ENCODE measurements at regions of chr17 and their contacts with region 1.

Region 1: DNA sequence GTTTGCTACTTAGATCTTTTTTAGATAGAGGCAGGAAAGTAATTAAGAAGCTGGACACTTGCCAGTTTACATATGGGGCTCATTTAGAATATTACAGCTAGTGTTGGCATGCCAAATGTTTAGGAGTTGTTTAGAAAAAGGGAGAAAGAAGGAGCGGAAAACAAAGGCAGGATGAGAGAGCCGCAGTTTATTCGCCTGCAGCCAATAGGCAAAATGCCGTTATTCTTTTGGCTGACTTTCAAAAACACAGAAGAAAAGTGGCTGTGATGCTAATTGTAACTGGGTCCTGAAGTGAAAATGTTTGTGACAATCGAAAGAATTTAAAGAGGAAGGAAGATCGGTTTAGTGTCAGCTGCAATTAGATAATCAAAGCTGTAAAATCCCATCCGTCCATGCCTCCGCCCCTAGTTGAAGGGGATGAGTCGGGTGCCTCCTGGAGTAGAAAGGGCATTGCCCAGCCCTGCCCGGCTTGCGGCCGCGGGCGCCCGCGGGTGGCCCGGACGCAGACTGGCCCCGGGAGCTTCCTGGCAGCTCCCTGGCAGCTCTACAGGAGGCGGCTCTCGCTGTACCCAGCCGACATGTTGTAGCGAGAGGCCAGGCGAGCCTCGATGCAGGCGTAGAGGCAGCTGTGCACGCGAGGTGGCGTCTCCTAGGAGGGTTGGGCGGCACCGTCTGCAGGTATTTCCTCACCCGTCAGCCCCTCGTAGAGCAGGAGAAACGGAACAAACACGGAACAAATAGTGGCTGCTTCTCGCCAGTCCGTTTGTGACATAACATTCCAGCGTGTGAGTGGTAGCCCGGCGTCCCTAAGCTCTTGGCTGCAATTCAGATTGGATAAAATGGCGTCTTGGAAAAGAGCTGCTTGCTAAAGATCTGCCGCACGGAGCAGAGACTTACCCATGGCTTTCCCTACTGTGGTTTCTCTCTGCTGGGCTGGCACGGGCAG is 82.2 kb downstream of the TNRC6C start:
- DNase-seq: peak; percentile 95
- H3K4me3 ChIP-seq: peak overlapping the region; percentile 72 to 75
- H3K27ac ChIP-seq: peak overlapping the region; percentile 89 to 100
- H3K4me1 ChIP-seq: peaks cover 7 to 41% of the 10 kb centered on the region in 2 experiments; a peak in 2 of 4 replicates
- H3K27me3 ChIP-seq: no peaks in the 10 kb centered on the region
- CTCF ChIP-seq: peak; percentile 40
- EP300 ChIP-seq: peak in 1 of 2 experiments; percentile 77; a peak in 2 of 4 replicates
- RAD21 ChIP-seq: peak; percentile 9; the same call in 1 of the 2 replicates

Region 2: DNA sequence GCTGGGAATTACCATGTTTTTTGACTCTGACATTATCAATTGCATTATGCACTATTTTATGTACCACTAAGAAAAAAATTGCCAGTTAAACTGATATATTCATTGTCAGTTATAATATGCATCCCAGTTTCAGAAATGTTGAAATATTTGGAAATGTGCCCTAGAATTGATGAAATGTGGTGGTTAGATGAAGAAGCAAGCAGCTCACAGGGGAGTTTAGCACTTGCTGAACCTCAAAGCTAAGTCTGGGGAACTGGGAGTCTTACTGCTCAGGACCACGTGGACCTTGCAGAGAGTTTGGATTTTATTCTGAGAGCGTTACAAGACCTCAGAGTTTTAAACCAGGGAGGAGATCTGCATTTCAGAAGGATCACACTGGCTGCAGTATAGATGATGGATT is 14.3 kb before region 1 on chr17:
- CTCF ChIA-PET with region 1: interaction called, 49 read pairs
- POLR2A ChIA-PET with region 1: interaction called, 5 read pairs
- DNase-seq: no peak
- H3K4me3 ChIP-seq: no peak overlapping the region
- H3K27ac ChIP-seq: no peak overlapping the region
- H3K4me1 ChIP-seq: peaks cover 0 to under 1% of the 10 kb centered on the region in 2 experiments; a peak in 2 of 4 replicates
- H3K27me3 ChIP-seq: no peaks in the 10 kb centered on the region
- CTCF ChIP-seq: no peak
- EP300 ChIP-seq: no peak
- RAD21 ChIP-seq: no peak

Region 3: DNA sequence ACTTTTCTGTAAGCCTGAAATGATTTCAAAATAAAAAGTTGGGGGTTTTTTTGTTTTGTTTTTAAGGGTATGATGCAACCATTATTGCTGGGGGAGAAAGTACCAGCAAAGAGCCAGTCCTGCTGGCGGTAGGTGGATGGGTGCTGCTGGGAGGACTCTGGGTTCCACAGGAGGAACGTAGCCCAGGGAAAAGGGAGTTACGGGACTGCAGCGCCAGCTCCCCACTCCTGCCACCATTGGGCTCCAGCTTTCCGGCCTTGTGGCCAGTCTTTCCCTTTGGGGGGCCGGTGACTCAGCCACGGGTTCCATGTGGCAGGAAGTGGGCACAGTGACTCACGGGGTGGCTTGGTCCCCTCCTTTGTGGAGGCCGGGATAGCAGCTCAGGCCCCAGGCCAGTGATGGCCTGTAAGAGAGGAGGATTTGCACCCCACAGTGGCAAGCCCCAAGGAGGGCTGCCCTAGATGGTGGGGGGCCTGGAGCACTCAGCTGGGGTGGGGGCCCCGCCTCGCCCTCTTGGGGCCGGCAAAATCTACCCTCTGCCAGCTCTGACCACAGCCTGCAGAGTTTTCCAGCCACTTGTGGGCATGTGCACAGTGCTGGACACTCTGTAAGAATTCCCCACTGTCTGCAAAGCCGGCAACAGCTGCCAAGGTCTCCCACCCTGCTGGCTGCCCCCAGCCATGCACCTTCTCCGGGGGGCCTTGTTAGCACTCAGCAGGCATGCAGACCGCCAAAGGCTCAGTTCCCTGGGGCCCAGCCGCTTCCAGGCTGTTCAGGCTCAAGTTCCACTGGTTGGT is 288.7 kb after region 1 on chr17:
- CTCF ChIA-PET with region 1: no interaction called
- POLR2A ChIA-PET with region 1: no interaction called
- DNase-seq: peak; percentile 41
- H3K4me3 ChIP-seq: no peak overlapping the region
- H3K27ac ChIP-seq: peak overlapping the region; percentile 29 to 93; a peak in 3 of 4 replicates
- H3K4me1 ChIP-seq: peaks cover 12 to 41% of the 10 kb centered on the region in 2 experiments; a peak in 3 of 4 replicates
- H3K27me3 ChIP-seq: no peaks in the 10 kb centered on the region
- CTCF ChIP-seq: peak; percentile 24
- EP300 ChIP-seq: peak in 1 of 2 experiments; percentile 97; a peak in 2 of 4 replicates
- RAD21 ChIP-seq: no peak

Measured in SK-N-SH (cell line).